ENCODE measurements at regions of chr17 and their contacts with region 1.

Region 1: DNA sequence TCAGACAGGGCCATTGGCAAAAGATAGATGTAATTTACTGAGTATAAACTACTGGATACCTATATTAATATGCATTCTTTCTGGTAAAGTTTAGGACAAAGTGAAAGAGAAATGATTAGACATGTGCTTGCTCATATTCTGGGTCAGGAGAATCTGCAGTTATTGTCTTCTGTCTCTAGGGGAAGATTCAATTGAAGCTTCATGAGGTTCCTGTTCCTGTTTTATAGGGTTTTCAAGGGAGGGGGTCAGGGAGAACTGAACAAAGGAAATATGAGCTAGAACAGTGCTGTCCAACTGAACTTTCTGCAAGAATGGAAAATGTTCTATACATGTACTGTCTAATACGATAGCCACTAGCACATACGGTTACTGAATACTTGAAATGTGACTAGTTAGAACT is 59.3 kb upstream of the CORO6 start:
- DNase-seq: no peak
- ATAC-seq: peak in 6 of 8 donors; percentile 6 to 58 (median 32)
- H3K4me3 ChIP-seq: peak overlapping the region in 1 of 10 donors; percentile 6
- H3K27ac ChIP-seq: peak overlapping the region; percentile 28 to 86 (median 76)
- H3K4me1 ChIP-seq: peaks cover 5 to 69% (median 55%) of the 10 kb centered on the region in 9 donors
- H3K27me3 ChIP-seq: no peaks in the 10 kb centered on the region
- CTCF ChIP-seq: peak in 3 of 9 donors; percentile 11 to 37 (median 17)

Region 2: DNA sequence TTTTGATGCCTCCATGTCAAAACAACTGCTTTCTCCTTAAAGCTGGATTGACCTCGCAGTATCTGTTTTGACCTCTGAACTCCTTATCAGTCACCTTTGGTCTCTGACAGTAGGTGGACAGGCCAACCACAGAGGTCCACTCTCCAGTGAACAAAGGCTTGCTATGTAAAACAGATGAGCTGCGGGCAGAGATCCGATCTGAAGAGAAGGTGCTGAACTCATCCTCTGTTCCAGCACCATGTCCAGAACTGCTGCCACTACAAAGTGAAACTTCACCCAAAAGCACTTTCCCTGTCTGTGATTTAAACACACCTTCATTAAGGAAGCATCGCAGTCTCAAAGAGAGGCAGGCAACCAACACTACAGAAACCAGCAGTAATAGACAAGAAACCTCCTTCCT is 58.0 kb after region 1 on chr17:
- intact Hi-C with region 1: loop called in 3 of 10 experiments (anchors 5 to 10 kb)
- DNase-seq: no peak
- ATAC-seq: peak in 1 of 8 donors; percentile 14
- H3K4me3 ChIP-seq: no peak overlapping the region
- H3K27ac ChIP-seq: peak overlapping the region in 9 of 10 donors; percentile 6 to 86 (median 51)
- H3K4me1 ChIP-seq: peaks cover 10 to 67% (median 51%) of the 10 kb centered on the region in 9 donors
- H3K27me3 ChIP-seq: no peaks in the 10 kb centered on the region
- CTCF ChIP-seq: no peak

Region 3: DNA sequence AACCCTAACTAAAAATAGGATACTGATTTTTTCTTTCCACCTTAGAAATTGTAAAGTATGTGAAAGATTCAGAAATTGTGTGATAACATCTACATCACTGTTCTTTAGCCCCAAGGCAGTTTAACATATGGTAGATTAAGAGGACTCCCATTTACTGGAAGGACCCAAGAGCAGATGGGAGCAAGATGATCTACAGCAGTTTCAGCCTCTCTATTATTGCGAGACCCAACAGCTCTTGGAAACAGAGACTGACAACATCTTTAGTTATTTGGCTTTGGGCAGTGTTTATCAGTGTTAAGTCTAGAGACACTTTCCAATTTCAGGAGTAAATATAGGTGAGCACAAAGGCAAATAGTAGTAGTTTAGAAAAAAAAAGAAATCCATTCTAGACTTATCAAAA is 65.6 kb after region 1 on chr17:
- intact Hi-C with region 1: loop called in 4 of 10 experiments (anchors 5 to 10 kb)
- DNase-seq: no peak
- ATAC-seq: no peak
- H3K4me3 ChIP-seq: no peak overlapping the region
- H3K27ac ChIP-seq: peak overlapping the region in 9 of 10 donors; percentile 43 to 84 (median 64)
- H3K4me1 ChIP-seq: peaks cover 3 to 65% (median 49%) of the 10 kb centered on the region in 9 donors
- H3K27me3 ChIP-seq: no peaks in the 10 kb centered on the region
- CTCF ChIP-seq: no peak

Region 4: DNA sequence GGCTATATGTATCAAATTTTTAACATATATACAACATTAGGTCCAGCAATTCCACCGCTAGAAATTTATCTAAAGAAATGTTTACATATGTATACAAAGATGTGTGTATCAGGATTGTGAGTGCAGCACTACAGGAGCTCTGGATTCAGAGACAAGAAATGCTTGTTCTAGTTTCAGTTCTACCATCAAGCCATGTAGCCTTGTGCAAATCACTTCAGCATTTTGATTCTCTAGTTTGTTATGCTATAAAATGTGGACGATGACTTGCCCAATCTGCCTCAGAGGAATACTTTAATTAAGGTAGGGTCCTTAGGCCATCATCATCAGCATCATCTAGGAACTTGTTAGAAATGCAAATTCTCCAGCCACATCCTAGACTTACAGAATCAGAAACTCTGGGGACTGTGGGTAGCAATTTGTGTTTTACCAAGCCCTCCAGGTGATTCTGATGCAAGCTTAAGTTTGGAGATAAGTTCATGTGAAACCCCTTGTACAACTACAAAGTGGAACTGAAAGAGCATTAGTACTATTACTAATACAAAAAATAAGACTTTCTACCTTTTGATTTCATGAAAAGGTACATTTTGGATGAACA is 71.9 kb after region 1 on chr17:
- intact Hi-C with region 1: loop called in 3 of 10 experiments (anchors 5 to 10 kb)
- DNase-seq: no peak
- ATAC-seq: no peak
- H3K4me3 ChIP-seq: no peak overlapping the region
- H3K27ac ChIP-seq: peak overlapping the region in 1 of 10 donors; percentile 2
- H3K4me1 ChIP-seq: peaks cover 0 to 39% (median 8%) of the 10 kb centered on the region in 9 donors
- H3K27me3 ChIP-seq: no peaks in the 10 kb centered on the region
- CTCF ChIP-seq: no peak

Region 5: GRCh38 chr17:29760761-29761696 is 79.0 kb after region 1 on chr17:
- intact Hi-C with region 1: loop called in 2 of 10 experiments (anchors 2 to 10 kb)
- DNase-seq: peak; percentile 91 to 94
- ATAC-seq: peak; percentile 96 to 99 (median 98)
- H3K4me3 ChIP-seq: peak overlapping the region; percentile 69 to 97 (median 86)
- H3K27ac ChIP-seq: peak overlapping the region; percentile 86 to 96 (median 92)
- H3K4me1 ChIP-seq: peaks cover 3 to 40% (median 19%) of the 10 kb centered on the region in 9 donors
- H3K27me3 ChIP-seq: no peaks in the 10 kb centered on the region
- CTCF ChIP-seq: peak in 2 of 9 donors; percentile 4 to 11

Region 6: DNA sequence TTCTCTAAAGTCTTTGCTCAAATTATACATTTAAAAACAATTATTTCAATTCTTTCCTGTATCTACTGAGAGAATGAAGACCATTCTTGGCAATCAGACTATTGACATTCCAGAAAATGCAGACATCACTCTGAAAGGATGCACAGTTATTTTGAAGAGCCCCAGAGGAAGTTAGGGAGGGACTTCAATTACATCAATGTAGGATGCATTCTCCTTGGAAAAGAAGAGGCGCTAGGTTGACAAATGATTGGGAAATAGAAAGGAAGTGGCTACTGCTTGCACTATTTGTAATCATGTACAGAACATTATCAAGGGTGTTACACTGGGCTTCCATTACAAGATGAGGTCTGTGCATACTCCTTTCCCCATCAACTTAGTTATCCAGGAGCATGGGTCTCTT is 173.6 kb after region 1 on chr17:
- intact Hi-C with region 1: no loop called
- DNase-seq: no peak
- ATAC-seq: no peak
- H3K4me3 ChIP-seq: no peak overlapping the region
- H3K27ac ChIP-seq: no peak overlapping the region
- H3K4me1 ChIP-seq: peaks cover 0 to 39% (median 0%) of the 10 kb centered on the region in 9 donors
- H3K27me3 ChIP-seq: no peaks in the 10 kb centered on the region
- CTCF ChIP-seq: no peak

Region 7: DNA sequence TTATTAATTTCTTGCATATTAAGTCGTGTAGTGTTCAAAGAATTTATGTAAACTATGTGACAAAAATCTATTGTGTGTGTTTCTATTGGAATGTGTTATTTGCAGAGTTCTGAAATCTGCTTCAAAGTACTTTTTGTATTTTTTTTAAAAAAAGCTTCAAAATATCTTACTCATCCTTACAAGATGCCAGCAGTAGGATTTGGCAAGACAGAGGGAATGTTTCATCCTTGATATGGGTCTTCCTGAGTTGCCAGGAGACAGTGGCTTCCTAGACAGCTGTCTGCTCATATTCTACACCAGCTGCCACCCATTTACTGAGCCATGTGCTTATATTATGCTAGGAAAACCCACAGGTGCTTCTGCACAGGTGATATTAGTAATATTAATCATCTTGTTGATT is 295.8 kb after region 1 on chr17:
- intact Hi-C with region 1: no loop called
- DNase-seq: no peak
- ATAC-seq: no peak
- H3K4me3 ChIP-seq: no peak overlapping the region
- H3K27ac ChIP-seq: no peak overlapping the region
- H3K4me1 ChIP-seq: no peaks in the 10 kb centered on the region
- H3K27me3 ChIP-seq: no peaks in the 10 kb centered on the region
- CTCF ChIP-seq: no peak